ENCODE measurements at regions of chr15 and their contacts with region 1.

Region 1: DNA sequence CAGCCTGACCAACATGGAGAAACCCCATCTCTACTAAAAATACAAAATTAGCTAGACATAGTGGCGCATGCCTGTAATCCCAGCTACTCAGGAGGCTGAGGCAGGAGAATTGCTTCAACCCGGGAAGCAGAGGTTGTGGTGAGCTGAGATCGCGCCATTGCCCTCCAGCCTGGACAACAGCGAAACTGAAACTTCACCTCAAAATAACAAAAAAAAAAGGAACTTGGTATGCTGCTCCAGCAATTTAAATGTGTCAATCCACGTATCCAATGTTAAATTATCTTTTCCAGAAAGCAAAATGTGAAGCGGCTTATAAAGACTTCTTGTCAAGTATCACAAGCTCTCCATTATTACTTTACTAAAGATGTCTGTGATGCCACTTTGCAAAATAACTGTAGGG is 9.9 kb upstream of the ARIH1 start:
- DNase-seq: no peak
- H3K4me3 Mint-ChIP-seq: no peak overlapping the region
- H3K27ac Mint-ChIP-seq: no peak overlapping the region
- H3K4me1 Mint-ChIP-seq: no peaks in the 10 kb centered on the region
- H3K27me3 Mint-ChIP-seq: no peaks in the 10 kb centered on the region
- CTCF ChIP-seq: no peak

Region 2: DNA sequence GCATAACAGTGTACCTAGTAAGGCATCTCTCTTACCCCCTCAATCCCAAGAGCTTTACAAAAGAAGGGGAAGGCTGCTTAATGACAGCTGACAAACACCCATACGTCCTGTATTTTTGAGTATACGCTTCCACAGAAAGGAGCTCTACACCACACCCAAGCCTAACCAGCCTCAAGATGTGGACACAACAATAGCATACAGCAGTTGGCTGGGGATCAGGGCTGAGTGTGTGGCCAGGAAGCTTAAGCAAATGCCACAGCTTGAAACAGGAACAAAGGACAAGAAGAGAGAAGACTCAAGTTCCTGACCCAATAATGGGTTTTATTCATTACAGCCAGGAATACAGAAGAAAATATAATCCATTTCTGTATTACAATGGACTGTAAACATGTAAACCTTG is 95.4 kb before region 1 on chr15:
- CTCF ChIA-PET with region 1: interaction called, 11 read pairs
- intact Hi-C with region 1: no loop called
- DNase-seq: no peak
- H3K4me3 Mint-ChIP-seq: no peak overlapping the region
- H3K27ac Mint-ChIP-seq: no peak overlapping the region
- H3K4me1 Mint-ChIP-seq: peaks cover 9% of the 10 kb centered on the region
- H3K27me3 Mint-ChIP-seq: no peaks in the 10 kb centered on the region
- CTCF ChIP-seq: no peak

Region 3: GRCh38 chr15:72375847-72376581 is 88.2 kb before region 1 on chr15 and contains the start of gene HEXA:
- CTCF ChIA-PET with region 1: no interaction called
- intact Hi-C with region 1: loop called (anchors 5 kb)
- DNase-seq: peak; percentile 99
- H3K4me3 Mint-ChIP-seq: peak within 1 kb of the TSS; percentile 85
- H3K27ac Mint-ChIP-seq: peak within 1 kb of the TSS; percentile 90
- H3K4me1 Mint-ChIP-seq: peaks cover 24% of the 10 kb centered on the region
- H3K27me3 Mint-ChIP-seq: peaks cover 18% of the 10 kb centered on the region
- CTCF ChIP-seq: no peak
- total RNA-seq, gene HEXA: 129 and 145 TPM in 2 replicates

Region 4: DNA sequence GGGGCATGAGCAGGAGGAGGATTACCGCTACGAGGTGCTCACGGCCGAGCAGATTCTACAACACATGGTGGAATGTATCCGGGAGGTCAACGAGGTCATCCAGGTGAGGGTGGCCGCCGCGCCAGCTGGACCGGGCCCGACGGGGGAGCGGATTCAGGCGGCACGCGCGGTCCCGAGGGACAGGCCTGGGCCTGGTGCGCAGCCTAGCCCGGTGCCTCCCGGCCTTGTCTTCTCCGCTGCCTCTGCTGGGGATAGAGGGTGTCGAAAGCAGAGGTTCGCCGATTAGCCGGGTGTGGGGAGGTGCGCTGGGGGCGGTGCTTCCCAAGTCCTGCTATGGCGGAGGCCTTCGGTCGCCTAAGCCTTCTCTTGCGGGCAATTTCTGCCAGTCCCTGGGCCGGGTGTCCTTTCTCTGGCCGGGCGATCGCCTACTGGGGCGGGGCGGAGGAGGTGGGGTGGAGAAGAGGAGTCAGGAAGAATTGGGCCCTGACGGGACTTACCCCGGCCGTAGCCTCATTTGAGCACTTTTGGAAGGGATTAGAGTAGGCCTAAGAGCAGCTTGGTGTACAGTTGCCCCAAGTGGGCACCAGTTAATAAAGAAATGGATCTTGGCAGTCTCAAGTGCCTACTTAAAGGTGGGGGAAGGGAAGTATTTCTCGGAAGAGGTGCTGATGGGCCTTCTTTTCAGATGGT is 10.8 kb after region 1 on chr15:
- CTCF ChIA-PET with region 1: no interaction called
- intact Hi-C with region 1: no loop called
- DNase-seq: peak; percentile 80
- H3K4me3 Mint-ChIP-seq: peak overlapping the region; percentile 90
- H3K27ac Mint-ChIP-seq: peak overlapping the region; percentile 98
- H3K4me1 Mint-ChIP-seq: peaks cover 9% of the 10 kb centered on the region
- H3K27me3 Mint-ChIP-seq: no peaks in the 10 kb centered on the region
- CTCF ChIP-seq: no peak

Region 5: GRCh38 chr15:72515591-72516389 is 51.5 kb after region 1 on chr15:
- CTCF ChIA-PET with region 1: no interaction called
- intact Hi-C with region 1: no loop called
- DNase-seq: no peak
- H3K4me3 Mint-ChIP-seq: no peak overlapping the region
- H3K27ac Mint-ChIP-seq: no peak overlapping the region
- H3K4me1 Mint-ChIP-seq: peaks cover 14% of the 10 kb centered on the region
- H3K27me3 Mint-ChIP-seq: no peaks in the 10 kb centered on the region
- CTCF ChIP-seq: no peak